Posterior cingulate gyrus (tissue), 11 donors: ENCODE measurements at regions of chr6 and their contacts with region 1.

Region 1: DNA sequence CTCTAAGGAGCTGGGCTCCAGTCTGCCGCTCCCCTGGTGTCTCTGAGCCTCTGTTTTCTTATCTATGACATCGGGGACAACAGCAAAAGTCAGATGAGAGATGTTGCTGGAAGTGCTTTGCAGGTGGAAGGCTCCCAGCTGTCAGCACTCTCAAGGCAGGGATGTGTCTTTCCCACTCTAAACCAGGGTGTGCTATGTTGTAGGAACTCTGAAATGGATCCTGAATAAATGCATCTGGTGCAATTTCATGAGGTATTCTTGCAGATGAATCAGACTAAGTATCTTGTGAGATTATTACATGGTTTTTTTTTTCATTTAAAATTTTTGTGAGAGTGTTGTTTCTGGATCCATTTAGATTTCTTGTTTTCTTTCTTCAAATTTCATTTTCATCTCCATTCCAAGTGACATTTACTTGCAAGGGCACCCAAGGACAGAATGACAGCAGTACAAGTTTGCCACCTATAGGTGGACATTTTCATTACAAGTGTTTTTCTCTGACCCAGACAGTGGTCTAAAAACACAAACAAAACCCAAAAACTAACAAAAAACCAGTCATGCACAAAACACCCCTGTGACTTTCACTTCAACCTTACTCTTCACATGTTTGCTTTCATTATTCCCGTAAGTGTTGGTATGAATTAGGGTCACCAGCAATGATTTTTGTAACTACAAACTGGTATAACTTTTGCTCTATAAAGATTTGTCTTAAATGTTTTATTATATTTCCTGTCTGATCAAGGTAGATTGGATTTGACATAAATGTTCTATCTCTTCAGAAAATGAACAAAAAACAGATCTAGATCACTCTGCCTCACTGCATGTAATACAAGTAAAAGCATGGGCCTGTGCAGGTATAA is 14.7 kb upstream of the SIM1 start:
- DNase-seq: no peak

Region 2: GRCh38 chr6:100568255-100568654 is 88.8 kb after region 1 on chr6:
- intact Hi-C with region 1: no loop called
- DNase-seq: no peak

Region 3: GRCh38 chr6:100657678-100658330 is 178.4 kb after region 1 on chr6:
- intact Hi-C with region 1: loop called (anchors 5 kb)
- DNase-seq: no peak